Psoas muscle (tissue), 8 donors: ENCODE measurements at regions of chr1 and their contacts with region 1.

Region 1: DNA sequence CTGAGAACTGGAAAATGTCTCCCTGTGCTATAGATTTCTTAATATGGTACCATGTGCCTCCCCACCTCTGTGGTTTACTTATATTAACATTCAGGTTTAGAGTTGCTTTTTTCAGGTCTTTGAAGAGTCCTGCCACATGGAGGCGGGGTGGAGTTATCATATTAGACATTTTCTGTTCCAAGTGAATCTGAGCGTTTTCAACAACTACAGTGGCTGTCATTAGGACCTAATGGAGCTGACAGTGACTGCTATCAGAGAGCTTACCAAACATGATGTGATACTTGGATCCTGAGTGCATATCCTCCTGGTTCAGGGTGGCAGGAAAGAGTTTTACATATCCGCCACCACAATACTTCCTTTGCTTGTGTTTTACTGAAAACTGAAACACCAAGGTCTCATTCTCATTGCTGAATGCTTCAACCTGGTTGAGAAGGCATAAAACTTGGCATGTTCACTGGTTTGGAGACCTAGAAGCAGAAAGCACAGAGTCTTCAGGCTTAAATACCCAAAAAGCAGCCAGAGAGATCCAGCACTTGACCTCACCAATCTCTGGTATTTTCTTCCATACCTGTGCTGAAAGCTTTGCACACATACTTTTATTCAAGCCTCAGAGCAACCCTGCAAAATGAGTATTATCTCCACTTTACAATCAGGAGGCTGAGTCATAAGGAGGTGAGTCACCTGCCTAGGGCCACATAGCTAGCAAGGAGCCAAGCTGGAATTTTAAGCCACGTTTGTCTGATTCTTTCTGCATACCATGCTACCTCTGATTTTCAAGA is 47.4 kb upstream of the OSBPL9 start:
- DNase-seq: no peak
- ATAC-seq: peak in 3 of 4 donors; percentile 37 to 50 (median 41)
- H3K4me3 ChIP-seq: no peak overlapping the region
- H3K27ac ChIP-seq: peak overlapping the region; percentile 58
- H3K4me1 ChIP-seq: peaks cover 51% of the 10 kb centered on the region
- H3K27me3 ChIP-seq: no peaks in the 10 kb centered on the region
- CTCF ChIP-seq: no peak

Region 2: DNA sequence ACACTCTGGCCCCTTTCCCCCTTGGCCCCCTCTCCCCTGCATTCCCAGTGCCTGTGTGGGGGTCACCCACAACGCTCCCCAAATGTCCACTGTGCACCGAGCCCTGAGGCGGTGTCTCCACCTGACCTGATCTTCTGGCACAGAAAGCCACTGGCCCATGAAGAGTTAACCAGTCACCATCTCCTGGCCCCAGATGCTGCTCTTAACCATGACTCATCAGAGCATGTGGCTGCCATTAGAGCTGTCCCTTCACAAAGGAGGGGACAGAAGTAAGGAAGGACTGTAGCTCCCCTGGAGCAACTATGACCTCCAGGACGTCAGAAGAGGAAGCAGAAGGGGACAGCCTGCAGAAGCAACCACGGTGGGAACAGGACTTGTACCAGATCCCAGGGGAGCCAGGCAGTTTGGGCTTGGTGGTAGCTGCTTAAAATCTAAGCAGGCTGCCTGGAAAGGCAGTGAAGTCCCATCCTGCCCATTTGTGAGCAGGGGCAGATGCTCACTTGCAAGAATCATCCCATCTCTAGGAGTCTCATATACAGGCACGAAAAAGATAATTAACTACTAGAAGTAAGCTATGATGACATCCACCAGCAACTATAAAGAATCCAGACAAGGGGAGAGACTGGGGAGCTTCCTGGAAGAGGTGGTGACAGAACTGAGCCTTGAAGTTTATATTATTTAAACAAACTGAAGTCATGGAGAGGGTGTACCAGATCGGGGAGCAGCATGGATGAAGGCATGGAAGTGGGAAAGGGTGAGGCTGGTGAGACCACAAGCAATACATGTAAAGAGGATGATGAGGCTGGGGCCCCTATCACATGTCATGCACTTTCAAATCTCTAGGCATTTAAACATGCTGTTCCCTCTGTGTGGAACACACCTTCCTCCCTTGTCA is 238.0 kb before region 1 on chr1:
- intact Hi-C with region 1: no loop called
- DNase-seq: no peak
- ATAC-seq: peak; percentile 87 to 95 (median 90)
- H3K4me3 ChIP-seq: peak overlapping the region; percentile 70
- H3K27ac ChIP-seq: peak overlapping the region; percentile 55
- H3K4me1 ChIP-seq: peaks cover 8% of the 10 kb centered on the region
- H3K27me3 ChIP-seq: peaks cover 0 to 5% (median 0%) of the 10 kb centered on the region in 3 donors
- CTCF ChIP-seq: no peak

Region 3: DNA sequence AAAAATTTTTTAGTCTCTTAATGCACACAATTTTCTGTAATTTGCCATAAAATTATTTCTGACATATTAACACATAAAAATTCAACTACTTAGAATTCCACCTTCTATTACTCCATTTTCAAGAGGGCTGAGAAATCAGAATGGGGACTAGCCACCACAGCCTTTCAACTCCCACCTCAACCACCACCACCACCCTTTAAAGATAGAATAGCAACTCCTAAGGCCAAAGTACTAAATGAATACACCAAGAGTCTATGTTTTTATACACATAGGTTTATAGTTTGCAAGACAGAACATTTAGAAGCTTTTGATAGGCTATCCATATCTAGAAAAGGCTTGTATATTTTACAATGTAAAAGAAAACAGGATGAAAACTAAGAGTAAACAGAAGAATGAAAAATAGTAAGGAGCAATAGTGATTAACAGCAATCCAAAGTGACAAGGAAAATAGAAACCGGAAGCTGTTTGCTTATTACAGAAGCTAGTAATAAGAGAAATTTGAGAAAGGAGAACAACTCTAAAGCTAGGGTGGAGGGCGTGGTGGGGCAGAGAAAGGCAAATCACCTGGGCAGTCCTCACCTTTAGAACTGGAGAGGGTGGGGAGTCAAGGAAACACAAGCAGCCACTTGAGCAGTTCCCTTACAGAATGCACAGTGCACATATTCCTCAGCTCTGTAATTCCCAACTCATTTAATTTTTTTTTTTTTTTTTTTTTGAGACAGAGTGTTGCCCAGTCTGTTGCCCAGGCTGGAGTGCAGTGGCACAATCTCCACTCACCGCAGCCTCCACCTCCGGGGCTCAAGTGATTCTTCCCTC is 78.1 kb before region 1 on chr1:
- intact Hi-C with region 1: no loop called
- DNase-seq: no peak
- ATAC-seq: no peak
- H3K4me3 ChIP-seq: no peak overlapping the region
- H3K27ac ChIP-seq: peak overlapping the region; percentile 54
- H3K4me1 ChIP-seq: peaks cover 62% of the 10 kb centered on the region
- H3K27me3 ChIP-seq: no peaks in the 10 kb centered on the region
- CTCF ChIP-seq: no peak

Region 4: GRCh38 chr1:51600529-51600928 is 31.1 kb after region 1 on chr1:
- intact Hi-C with region 1: loop called (anchors 5 kb)
- DNase-seq: no peak
- ATAC-seq: peak in 3 of 4 donors; percentile 30 to 63 (median 39)
- H3K4me3 ChIP-seq: no peak overlapping the region
- H3K27ac ChIP-seq: peak overlapping the region; percentile 46
- H3K4me1 ChIP-seq: peaks cover 16% of the 10 kb centered on the region
- H3K27me3 ChIP-seq: no peaks in the 10 kb centered on the region
- CTCF ChIP-seq: no peak

Region 5: DNA sequence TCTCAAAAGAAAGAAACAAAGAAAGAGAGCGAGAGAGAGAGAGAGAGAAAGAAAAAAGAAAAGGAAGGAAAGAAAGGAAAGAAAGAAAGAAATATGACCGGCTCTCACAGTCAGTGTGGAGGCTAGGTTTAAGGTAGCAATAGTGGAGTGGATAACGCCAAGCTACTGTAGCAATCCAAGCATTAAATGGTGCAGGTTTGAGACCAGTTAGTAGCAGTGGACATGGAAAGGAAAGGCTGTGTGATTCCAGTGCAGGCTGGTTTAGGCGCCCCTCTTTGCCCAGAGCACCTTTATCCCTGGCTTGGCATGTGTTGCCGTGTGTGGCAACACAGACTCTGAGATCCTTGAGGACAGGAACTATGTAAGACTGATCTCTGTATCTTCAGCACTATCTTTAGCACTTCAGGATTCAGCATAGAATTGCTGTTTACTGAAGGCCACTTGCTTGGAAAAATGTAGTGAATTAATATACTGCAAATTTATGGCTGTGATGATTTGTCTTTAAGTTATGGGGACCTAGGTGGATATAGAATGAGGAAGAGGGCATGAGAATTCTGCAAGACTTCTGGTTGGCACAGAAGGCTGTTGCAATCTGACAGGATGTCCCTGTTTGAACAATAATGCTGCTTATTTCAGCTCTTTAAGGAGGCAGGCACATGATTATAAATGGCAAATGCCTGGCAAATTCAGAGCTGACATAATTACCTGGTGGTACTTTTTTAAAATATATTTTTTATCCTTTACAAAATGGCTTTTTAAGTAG is 36.7 kb after region 1 on chr1:
- intact Hi-C with region 1: loop called (anchors 5 kb)
- DNase-seq: peak in 1 of 2 donors; percentile 65
- ATAC-seq: peak; percentile 87 to 90 (median 89)
- H3K4me3 ChIP-seq: peak overlapping the region; percentile 33
- H3K27ac ChIP-seq: peak overlapping the region; percentile 82
- H3K4me1 ChIP-seq: peaks cover 29% of the 10 kb centered on the region
- H3K27me3 ChIP-seq: no peaks in the 10 kb centered on the region
- CTCF ChIP-seq: no peak

Region 6: DNA sequence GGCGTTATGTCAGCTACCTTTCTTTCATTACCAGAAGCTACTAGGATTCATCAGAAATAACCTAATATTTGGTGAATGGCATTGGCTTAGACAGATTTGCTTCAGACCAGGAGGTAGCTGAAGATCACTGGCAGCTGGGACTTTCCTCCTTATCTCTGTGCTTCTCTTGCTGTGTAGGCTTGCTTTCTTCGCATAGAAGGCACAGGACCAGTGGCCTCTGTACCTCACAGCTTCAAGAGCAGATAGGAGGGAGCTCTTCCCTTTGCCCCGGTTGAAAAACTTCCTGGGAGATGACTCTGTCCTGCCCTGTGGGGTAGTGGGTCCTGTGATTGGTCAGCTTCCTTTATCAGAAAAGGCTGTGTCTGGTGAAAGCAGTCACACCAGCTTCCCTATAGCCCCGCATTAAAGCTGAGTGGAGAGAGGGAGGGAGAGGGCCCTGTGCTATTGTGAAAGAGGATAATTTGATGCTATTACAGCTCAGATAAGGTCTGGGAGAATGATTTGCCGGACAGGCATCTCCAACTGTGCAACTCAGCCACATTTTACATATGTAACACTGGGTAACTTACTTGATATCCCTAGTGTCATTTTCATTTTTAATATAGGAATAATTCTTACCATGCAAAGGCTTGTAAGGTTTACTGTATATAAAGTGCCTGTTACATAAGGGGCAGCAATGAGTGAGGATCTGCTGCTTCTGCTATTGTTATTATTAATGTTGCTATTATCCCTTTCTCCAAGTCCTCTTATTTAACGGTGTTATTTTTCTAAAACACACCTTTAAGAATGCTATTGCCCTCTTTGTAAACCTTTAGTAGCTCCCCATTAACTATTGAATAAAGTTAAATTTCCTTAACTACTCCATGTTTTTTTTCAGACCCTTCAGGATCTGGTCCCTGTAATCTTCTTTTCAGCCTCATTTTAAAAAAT is 79.0 kb after region 1 on chr1:
- intact Hi-C with region 1: no loop called
- DNase-seq: no peak
- ATAC-seq: peak; percentile 71 to 81 (median 76)
- H3K4me3 ChIP-seq: no peak overlapping the region
- H3K27ac ChIP-seq: peak overlapping the region; percentile 76
- H3K4me1 ChIP-seq: peaks cover 76% of the 10 kb centered on the region
- H3K27me3 ChIP-seq: no peaks in the 10 kb centered on the region
- CTCF ChIP-seq: no peak

Region 7: DNA sequence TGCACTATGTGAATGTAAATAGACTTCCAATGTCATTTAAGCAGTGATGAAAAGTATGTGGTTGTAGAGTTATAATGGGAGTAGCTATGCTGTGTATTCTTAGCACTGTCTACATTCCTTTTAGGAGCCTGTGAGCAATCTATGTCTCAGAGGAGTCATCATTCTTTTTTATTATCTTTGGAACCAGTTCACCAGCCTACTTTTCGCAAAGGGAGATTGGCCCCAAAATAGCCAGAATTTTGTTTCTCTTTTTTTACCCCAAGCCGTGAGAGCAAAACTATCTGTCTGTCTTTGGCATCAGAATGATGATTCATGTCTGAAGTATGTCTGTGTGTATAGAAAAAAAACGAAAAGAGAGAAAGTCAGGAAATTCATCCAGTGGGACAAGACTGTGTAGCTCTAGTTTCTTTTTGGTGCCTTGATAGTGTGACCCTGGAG is 91.6 kb after region 1 on chr1:
- intact Hi-C with region 1: no loop called
- DNase-seq: no peak
- ATAC-seq: peak; percentile 83 to 90 (median 83)
- H3K4me3 ChIP-seq: no peak overlapping the region
- H3K27ac ChIP-seq: peak overlapping the region; percentile 75
- H3K4me1 ChIP-seq: peaks cover 88% of the 10 kb centered on the region
- H3K27me3 ChIP-seq: no peaks in the 10 kb centered on the region
- CTCF ChIP-seq: no peak

Region 8: DNA sequence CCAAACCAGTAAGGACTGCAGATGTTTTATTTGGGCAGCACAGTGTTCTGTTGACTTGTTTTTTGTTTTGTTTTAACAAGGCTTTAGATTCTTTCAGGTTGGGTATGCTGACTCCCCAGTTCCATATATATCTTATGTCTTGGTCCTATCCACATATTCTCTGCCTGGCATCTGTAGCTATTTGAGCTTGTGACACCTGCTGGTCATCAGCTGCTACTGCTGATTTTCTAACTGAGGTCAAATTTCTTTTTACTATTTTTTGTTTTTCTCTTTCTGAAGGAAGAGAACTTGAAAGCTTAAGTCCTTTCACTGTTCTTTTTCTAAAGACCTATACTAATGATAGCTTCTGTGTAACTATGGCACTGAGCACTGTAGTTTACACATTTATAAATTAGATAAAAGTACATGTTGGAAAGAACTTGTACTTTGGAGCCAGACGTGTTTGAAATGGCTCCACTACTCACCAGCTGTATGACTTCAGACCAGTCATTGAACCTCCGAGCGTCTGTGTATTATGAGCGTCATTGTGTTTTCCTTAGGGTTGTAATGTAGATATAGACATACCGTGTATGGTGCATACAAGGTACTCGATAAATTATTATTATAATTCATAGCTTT is 199.6 kb after region 1 on chr1:
- intact Hi-C with region 1: loop called in 1 of 2 experiments (anchors 2 kb)
- DNase-seq: no peak
- ATAC-seq: peak; percentile 82 to 87 (median 85)
- H3K4me3 ChIP-seq: no peak overlapping the region
- H3K27ac ChIP-seq: peak overlapping the region; percentile 48
- H3K4me1 ChIP-seq: peaks cover 7% of the 10 kb centered on the region
- H3K27me3 ChIP-seq: no peaks in the 10 kb centered on the region
- CTCF ChIP-seq: peak; percentile 83